HCT116 (cell line): ENCODE measurements at regions of chr11 and their contacts with region 1.

Region 1: GRCh38 chr11:12411806-12412727 is 34.7 kb downstream of the PARVA start:
- DNase-seq: peak; percentile 56
- ATAC-seq: peak; percentile 96
- H3K4me3 ChIP-seq: peak overlapping the region in 1 of 2 experiments; percentile 39; a peak in 2 of 4 replicates
- H3K27ac ChIP-seq: peak overlapping the region; percentile 6; the same call in 1 of the 2 replicates
- H3K4me1 ChIP-seq: peaks cover 5 to 16% of the 10 kb centered on the region in 2 experiments; a peak in 3 of 4 replicates
- H3K27me3 ChIP-seq: no peaks in the 10 kb centered on the region
- CTCF ChIP-seq: peak; percentile 75 to 90 (median 82); a peak in 5 of 6 replicates
- POLR2A ChIP-seq: no peak
- RAD21 ChIP-seq: peak; percentile 84

Region 2: DNA sequence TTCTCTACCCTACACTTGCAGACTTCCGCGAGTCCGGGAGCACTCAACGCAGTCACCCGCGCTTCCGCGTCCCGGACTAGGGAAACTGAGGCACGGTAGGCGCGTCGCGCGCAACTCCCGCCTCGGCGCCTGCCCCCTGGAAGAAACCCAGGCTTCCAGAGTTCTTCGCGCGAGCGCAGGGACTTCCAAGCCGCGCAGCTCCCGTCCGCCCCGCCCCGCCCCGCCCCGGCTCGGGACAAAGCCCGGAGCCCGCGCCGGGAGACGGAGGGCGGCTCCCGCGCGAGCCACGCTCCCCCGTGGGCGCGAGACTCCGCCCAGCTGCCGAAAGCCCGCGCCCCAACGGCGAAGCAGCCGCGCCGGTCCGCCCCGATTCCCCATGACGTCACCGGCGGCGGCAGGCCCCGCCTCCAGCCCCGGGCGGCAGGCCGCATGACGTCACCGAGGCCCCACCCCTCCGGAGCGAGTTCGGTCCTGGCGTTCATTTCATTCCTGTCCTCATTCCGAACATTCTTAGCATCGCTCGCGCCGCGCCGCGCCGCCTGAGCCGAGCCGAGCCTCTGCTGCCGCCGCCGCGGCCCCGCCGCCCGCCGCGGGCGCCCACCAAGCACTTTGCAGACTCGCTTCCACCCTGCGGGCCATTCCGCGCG is 262.0 kb after region 1 on chr11 and contains the start of gene TEAD1:
- CTCF ChIA-PET with region 1: no interaction called
- POLR2A ChIA-PET with region 1: no interaction called
- RAD21 ChIA-PET with region 1: no interaction called
- intact Hi-C with region 1: loop called (anchors 5 kb)
- DNase-seq: peak; percentile 74
- ATAC-seq: peak; percentile 86
- H3K4me3 ChIP-seq: peak within 1 kb of the TSS; percentile 68 to 69
- H3K27ac ChIP-seq: peak within 1 kb of the TSS; percentile 71
- H3K4me1 ChIP-seq: peaks cover 25 to 39% of the 10 kb centered on the region in 2 experiments
- H3K27me3 ChIP-seq: no peaks in the 10 kb centered on the region
- CTCF ChIP-seq: no peak
- POLR2A ChIP-seq: peak; percentile 48
- RAD21 ChIP-seq: peak; percentile 9; the same call in 1 of the 2 replicates
- total RNA-seq, gene TEAD1: 103 TPM

Region 3: DNA sequence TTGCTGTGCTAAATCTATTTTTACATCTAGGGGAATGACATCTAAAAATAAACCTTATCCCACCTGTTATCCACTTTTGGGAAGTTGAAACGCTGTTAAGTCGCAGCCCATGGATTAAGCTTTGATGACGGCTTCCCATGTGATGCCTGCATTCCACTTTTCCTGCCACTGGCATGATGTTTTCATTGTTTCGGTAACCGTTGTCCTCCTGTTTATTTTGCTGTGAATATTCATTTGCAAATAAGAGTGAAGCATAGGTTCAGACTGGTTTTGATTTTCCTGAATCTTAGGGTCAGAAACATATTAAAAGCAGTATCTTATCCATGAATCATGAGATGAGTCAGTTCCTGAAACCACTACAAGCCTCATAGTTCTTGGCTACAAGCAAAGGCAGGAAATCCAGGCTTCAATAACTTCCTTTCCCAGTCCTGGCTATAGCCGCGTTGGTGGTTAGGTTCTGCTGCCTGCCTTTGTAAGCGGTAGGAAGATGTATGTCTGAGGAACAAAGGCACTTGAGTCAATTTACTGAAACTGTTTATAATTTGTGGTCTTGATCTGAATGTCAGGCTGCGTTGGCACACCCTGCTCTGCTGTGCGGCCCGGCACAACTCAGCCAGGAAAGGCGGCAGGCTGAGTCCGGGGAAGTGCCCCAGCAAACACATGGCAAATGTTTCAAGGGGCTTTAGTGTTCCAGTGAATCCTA is 281.6 kb after region 1 on chr11:
- CTCF ChIA-PET with region 1: no interaction called
- POLR2A ChIA-PET with region 1: no interaction called
- RAD21 ChIA-PET with region 1: no interaction called
- intact Hi-C with region 1: loop called (anchors 5 kb)
- DNase-seq: peak; percentile 96
- ATAC-seq: peak; percentile 83
- H3K4me3 ChIP-seq: peak overlapping the region; percentile 19 to 47
- H3K27ac ChIP-seq: peak overlapping the region; percentile 92
- H3K4me1 ChIP-seq: peaks cover 91 to 99% of the 10 kb centered on the region in 2 experiments
- H3K27me3 ChIP-seq: no peaks in the 10 kb centered on the region
- CTCF ChIP-seq: no peak
- POLR2A ChIP-seq: no peak
- RAD21 ChIP-seq: peak; percentile 43